ENCODE measurements at regions of chr10 and their contacts with region 1.

Region 1: DNA sequence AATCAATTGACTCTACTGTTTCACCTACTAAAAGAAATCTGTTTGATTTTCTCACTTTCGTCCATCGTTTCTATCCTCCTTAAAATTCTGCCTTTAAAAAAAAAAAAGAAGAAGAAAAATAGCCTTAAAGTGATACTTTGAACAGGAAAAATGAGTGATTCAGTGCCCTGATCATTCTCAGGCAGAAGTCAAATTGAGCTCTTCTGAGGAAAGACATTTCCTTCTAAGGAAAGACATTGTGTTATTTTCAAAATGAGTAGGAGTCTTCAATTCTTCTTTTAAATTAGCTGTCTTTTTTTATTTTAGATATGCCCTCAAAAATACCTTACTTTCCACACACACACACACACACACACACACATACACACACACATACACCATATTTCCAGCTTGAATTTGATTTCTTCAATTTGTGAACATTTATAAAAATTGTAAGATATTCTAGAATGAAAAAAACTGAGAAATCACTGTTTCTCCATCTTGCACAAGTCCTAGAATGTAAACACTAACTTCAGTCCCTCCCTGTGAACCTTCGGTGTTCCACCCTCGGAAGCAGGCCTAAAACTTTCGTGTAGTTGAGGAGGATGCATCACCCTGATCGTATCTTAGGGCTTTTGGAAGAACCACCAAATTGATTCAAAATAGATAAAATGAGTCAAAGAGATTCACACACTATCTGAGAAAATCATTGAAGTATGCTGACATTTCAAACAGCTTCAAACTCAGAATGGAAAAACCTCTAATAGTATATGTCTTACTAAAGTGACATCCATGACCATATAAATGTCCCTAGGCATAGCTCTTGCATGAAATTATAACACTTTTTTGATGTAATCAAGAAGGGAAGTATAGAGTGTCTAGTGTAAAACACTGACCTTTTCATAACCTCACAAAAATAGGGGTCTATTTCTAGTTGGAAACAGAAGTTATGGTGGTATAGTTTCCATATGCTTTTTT is 270.8 kb downstream of the GATA3 start:
- DNase-seq: no peak
- H3K4me3 Mint-ChIP-seq: peak overlapping the region; percentile 63
- H3K27ac Mint-ChIP-seq: peak overlapping the region; percentile 85
- H3K4me1 Mint-ChIP-seq: peaks cover 57% of the 10 kb centered on the region
- H3K27me3 Mint-ChIP-seq: peaks cover 15% of the 10 kb centered on the region

Region 2: DNA sequence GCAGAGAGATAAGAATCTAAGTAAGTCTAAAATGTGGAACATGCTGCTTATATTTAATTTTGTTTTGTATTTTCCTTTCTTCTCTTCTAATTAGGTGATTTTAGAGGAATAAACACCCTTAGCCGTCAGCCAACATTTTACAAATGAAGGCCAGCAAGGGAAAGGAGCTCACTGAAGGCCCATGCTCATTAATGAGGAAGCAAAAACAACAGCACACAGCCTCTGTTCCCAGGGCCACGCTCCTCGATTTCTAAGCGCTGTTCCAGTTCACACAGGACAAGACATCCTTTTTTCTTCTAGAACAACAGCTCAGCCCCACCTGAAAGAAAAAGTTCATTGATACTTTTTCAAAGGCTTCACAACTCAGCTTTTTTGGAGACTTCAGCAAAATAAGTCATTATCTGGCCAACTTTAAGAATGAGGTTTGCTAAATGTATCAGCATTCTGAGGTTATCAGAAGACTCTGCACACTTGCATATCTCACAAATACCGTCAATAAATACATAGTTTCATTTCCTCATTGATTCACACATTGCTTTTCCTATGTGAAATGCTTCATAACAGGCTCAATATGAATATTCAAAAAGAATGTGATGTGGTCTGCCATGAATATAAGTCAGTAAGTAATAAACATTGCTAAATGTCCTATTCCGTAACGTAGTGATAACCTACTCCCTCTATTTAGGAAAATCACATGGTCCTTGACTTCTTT is 879.7 kb before region 1 on chr10:
- intact Hi-C with region 1: no loop called
- DNase-seq: no peak
- H3K4me3 Mint-ChIP-seq: no peak overlapping the region
- H3K27ac Mint-ChIP-seq: no peak overlapping the region
- H3K4me1 Mint-ChIP-seq: no peaks in the 10 kb centered on the region
- H3K27me3 Mint-ChIP-seq: peaks cover under 1% of the 10 kb centered on the region

Region 3: DNA sequence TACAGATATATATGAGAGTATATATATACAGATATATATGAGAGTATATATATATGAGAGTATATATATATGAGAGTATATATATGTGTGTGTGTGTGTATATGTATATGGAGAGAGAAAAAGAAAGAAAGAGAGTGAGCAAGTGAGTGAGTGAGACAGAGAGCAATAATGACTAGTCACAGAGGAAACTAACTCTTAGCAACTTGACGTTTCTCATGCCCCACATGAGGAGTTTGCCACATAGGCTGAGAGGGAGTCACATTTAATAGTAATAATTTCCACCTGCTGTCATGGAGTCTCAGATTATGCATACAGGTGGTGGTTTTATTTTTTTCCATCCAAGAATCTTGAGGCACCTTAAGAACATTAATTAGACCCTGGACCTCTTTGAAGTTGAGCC is 71.0 kb before region 1 on chr10:
- intact Hi-C with region 1: loop called (anchors 1 kb)
- DNase-seq: no peak
- H3K4me3 Mint-ChIP-seq: peak overlapping the region; percentile 38
- H3K27ac Mint-ChIP-seq: peak overlapping the region; percentile 77
- H3K4me1 Mint-ChIP-seq: peaks cover 48% of the 10 kb centered on the region
- H3K27me3 Mint-ChIP-seq: no peaks in the 10 kb centered on the region

Region 4: GRCh38 chr10:8312781-8313180 is 12.5 kb before region 1 on chr10:
- intact Hi-C with region 1: loop called (anchors 1 kb)
- DNase-seq: no peak
- H3K4me3 Mint-ChIP-seq: no peak overlapping the region
- H3K27ac Mint-ChIP-seq: peak overlapping the region; percentile 67
- H3K4me1 Mint-ChIP-seq: peaks cover 53% of the 10 kb centered on the region
- H3K27me3 Mint-ChIP-seq: no peaks in the 10 kb centered on the region

Region 5: DNA sequence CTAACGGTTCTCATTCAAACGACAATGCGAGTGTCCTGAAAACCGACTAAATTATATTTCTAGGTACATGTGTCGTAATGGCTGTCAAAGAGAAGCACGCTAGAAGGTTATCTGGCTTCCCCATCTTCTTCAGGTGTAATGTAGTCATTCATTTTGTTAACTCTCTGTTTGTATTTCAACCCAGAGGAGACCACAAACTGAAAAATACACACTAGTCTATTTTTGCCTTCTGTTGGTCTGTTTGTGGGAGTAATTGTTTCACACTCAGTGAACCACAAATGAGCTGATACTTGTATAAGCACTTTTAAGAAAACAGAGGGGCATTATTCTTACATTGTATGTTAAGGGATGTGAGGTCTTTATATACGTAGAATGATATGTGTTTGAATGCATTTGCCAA is 35.1 kb after region 1 on chr10:
- intact Hi-C with region 1: loop called (anchors 1 kb)
- DNase-seq: no peak
- H3K4me3 Mint-ChIP-seq: peak overlapping the region; percentile 32
- H3K27ac Mint-ChIP-seq: peak overlapping the region; percentile 78
- H3K4me1 Mint-ChIP-seq: peaks cover 56% of the 10 kb centered on the region
- H3K27me3 Mint-ChIP-seq: peaks cover 9% of the 10 kb centered on the region